ENCODE measurements at regions of chr20 and their contacts with region 1.

Region 1: DNA sequence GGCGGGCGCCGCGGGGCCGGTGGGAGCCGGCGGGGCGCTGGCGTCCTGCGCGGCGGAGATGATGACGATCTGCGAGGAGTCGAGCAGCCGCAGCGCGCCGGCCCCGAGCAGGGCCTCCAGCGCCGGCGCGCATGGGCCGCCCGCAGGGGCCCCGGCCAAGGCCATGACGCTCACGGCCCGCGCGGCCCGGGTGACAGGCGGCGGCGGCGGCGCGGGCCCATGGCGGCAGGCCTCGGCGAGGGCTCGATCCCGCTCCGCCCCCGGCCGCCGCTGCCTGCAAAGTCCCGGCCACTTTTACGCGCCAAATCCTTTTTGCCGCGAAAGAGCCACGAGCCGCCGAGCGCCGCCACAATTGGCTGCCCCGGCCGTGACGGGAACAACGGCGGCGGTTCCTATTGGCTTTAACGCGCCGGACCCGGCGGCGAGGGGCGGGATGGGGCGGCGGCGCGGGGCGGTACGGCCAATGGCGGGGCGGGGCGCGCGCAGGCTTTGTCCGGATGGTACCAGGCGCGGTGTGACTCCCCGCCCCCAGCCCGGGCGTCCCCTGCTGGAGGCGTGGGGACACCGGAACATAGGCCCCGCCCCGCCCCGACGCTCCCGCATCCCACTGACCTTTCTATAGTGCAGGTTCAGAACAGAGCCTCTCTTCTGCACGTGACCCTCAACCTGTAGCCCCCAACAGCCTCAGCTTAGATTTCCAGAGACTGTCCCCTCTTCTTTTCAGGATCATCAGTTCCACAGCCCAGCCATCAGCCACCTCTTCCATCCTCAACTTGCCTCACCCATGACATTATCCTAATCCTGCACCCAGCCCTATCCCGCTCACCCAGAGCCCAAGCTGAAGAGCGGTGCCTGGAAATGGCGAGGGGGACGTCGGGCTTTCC is at the start of gene E2F1:
- DNase-seq: peak; percentile 95
- H3K4me3 ChIP-seq: peak within 1 kb of the TSS; percentile 4 to 50 (median 11)
- H3K27ac ChIP-seq: peak within 1 kb of the TSS; percentile 15
- H3K4me1 ChIP-seq: peaks cover 36% of the 10 kb centered on the region
- H3K27me3 ChIP-seq: no peaks in the 10 kb centered on the region
- CTCF ChIP-seq: peak in 1 of 2 donors; percentile 30
- POLR2A ChIP-seq: no peak
- total RNA-seq, gene E2F1: 27.0 and 29.6 TPM in 2 replicates

Region 2: DNA sequence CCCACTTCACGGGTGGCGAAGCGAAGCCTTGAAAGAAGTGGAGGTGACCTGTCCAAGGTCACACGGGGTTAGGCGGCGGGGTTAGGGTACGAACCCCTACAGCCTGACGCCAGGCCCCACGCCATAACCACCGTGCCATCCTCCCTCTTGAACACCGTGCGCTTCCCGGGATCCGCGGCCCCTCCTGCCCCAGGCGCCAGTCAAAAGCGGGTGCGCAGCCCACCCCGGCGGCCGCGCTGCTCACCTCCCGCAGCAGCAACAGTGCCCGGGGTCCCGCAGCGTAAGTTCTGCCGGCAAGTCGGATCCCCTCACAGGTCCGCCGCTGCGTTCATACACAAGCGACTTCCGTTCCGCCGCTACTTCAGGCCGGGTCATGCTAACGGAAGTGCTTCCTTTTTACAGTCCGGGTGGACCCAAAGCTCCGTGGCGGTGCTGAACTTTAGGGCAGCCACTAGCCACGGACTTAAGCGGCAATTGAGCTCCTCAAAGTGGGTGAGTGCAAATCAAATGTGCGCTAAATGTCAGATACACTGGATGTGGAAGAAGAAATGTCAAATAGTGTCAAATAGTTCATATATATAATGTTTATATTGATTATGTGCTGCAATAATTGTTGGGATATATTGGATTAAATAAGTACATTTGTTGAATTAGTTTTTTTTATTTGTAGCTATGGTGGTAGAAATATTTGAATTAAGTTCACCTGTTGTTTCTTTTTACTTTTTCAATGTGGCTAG is 285.0 kb before region 1 on chr20 and contains the start of gene CDK5RAP1:
- CTCF ChIA-PET with region 1: no interaction called
- POLR2A ChIA-PET with region 1: no interaction called
- dilution Hi-C with region 1: no loop called
- intact Hi-C with region 1: no loop called
- DNase-seq: peak; percentile 90
- H3K4me3 ChIP-seq: peak within 1 kb of the TSS; percentile 44 to 81 (median 76)
- H3K27ac ChIP-seq: peak within 1 kb of the TSS; percentile 2
- H3K4me1 ChIP-seq: peaks cover 10% of the 10 kb centered on the region
- H3K27me3 ChIP-seq: no peaks in the 10 kb centered on the region
- CTCF ChIP-seq: no peak
- POLR2A ChIP-seq: peak; percentile 78
- total RNA-seq, gene CDK5RAP1: 31.1 and 36.5 TPM in 2 replicates

Region 3: DNA sequence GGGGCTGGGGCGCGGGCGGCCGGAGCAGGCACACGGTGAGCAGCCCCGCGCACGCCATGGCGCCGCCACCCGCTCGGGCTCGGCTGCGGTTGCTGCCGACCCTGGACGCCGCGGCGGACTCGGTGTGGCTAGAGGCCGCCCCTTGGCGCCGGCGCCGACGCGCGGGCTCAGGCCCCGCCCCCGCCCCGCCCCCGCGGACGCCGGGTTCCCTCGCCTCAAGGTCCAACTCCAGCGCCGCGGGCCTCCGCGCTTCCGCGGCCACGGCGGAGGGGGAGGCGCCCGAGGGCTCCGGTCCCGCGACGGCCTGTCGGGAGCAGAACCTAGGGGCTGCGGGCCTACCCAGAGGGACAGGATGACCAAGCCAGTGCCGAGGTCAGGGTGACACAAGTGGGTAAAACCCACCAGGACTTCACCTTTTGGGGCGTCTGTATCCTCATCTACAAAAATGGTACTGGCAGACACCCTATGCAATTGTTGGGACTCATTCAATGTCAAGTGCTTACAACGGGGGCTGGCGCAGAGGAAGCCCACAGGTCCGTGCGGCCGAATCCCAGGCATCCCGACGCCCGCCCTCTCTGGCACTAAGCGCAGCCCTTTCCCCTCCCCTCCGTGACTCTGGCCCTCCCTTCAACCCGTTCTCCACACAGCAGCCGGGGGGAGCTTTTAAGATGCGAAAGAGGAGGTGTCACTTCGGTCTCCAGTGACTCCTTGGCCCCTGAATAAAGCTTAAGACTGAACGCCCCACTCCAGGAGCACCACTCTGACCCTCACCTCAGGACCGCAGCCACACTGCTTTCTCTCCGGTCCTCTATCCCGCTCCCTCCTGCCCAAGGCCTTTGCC is 11.8 kb before region 1 on chr20 and contains the start of gene NECAB3:
- CTCF ChIA-PET with region 1: interaction called, 4 read pairs
- POLR2A ChIA-PET with region 1: no interaction called
- dilution Hi-C with region 1: no loop called
- intact Hi-C with region 1: loop called (anchors 1 kb)
- DNase-seq: peak; percentile 84
- H3K4me3 ChIP-seq: peak within 1 kb of the TSS; percentile 47 to 56 (median 47)
- H3K27ac ChIP-seq: peak within 1 kb of the TSS; percentile 30
- H3K4me1 ChIP-seq: peaks cover 15% of the 10 kb centered on the region
- H3K27me3 ChIP-seq: no peaks in the 10 kb centered on the region
- CTCF ChIP-seq: no peak
- POLR2A ChIP-seq: peak; percentile 68
- total RNA-seq, gene NECAB3: 18.1 and 20.2 TPM in 2 replicates

Region 4: GRCh38 chr20:33810885-33811777 is 124.8 kb after region 1 on chr20 and contains the start of gene CHMP4B:
- CTCF ChIA-PET with region 1: no interaction called
- POLR2A ChIA-PET with region 1: no interaction called
- dilution Hi-C with region 1: no loop called
- intact Hi-C with region 1: loop called (anchors 1 kb)
- DNase-seq: peak; percentile 98
- H3K4me3 ChIP-seq: peak within 1 kb of the TSS; percentile 60 to 86 (median 83)
- H3K27ac ChIP-seq: peak within 1 kb of the TSS; percentile 96
- H3K4me1 ChIP-seq: peaks cover 23% of the 10 kb centered on the region
- H3K27me3 ChIP-seq: no peaks in the 10 kb centered on the region
- CTCF ChIP-seq: no peak
- POLR2A ChIP-seq: peak; percentile 69
- total RNA-seq, gene CHMP4B: 105 and 112 TPM in 2 replicates